Head of caudate nucleus (tissue), 42 donors: ENCODE measurements at regions of chr20 and their contacts with region 1.

Region 1: DNA sequence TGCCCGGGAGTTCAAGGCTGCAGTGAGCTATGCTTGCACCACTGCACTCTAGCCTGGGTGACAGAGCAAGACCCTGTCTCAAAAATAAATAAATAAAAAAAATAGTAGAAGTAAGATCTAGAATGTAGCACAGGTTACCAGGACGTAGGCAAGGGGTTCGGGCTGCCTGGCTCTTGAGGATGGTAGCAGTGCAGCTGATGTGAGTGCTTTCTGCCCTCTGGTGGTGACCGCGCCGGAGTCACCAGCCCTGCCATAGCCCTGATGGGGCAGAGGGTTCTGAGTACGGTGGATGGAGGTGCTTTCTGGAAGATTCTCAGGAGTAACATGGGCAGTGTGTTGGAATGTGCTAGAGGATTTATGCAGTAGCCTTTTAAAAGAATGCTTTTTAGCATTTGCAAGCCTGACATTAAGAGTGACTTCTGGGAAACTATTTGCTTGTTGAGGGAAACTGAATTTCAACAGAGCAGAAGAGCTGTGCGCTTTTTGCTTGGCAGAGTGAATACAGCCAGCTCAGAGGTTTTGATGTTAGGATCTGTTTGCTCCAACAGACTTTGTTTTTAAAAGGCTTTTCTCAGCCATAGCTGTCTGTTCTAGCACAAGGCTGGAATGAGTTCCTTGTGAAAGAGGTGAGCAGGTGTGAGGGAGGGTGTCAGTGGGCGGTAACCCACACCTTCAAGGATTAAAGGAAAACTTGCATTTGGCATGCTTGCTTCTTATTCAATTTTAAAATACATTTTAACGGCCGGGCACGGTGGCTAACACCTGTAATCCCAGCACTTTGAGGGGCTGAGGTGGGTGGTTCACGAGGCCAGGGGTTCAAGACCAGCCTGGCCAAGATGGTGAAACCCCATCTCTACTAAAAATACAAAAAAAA is 65.9 kb downstream of the PTPN1 start:
- DNase-seq: peak; percentile 59 to 90 (median 74)

Region 2: GRCh38 chr20:50189681-50190582 is 386.2 kb before region 1 on chr20:
- intact Hi-C with region 1: loop called (anchors 5 kb)
- DNase-seq: peak in 40 of 42 donors; percentile 57 to 88 (median 76)

Region 3: DNA sequence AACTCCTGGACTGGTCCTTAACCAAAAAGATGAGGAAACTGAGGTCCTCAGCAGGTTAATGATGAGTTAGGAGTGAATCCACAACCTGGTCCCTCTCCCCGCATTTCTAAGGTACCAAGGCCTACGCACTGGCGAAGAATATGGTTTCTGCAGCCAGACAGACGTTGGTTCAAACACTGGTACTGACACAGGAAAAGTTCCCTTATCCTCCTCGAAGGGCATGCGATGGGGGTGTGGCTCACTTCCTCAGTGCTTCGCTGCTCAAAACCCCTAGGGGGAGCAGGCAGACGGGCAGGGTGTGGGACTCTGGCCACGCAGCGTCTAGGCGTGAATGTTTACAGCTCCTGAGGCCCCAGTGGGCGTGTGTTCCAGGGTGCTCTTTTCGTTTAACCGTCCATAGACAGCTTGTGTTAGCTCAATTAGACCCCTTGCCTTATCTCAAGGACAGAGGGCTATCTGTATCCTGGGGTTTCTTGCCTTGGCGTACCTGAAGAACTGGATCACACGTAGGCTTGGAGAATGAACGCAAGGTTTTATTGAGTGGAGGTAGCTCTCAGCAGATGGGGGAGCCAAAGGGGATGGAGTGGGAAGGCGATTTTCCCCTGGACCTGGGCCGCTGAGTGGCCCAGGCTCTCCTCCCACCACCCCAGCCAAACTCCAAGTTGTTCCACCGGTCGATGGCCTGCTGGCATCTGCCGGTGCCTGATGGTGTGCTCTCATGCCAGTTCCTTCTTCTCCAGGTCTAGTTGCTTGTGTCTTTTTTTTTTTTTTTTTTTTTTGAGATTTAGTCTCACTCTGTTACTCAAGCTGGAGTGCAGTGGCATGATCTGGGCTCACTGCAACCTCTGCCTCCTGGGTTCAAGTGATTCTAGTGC is 97.7 kb before region 1 on chr20:
- intact Hi-C with region 1: loop called (anchors 10 kb)
- DNase-seq: peak in 37 of 42 donors; percentile 17 to 71 (median 40)

Region 4: GRCh38 chr20:50509935-50510705 is 66.0 kb before region 1 on chr20 and contains the start of gene PTPN1:
- intact Hi-C with region 1: loop called (anchors 5 kb)
- DNase-seq: peak; percentile 96 to 100 (median 99)

Region 5: GRCh38 chr20:50610221-50610620 is 34.1 kb after region 1 on chr20:
- intact Hi-C with region 1: no loop called
- DNase-seq: no peak